HEK293 (cell line): ENCODE measurements at regions of chr7 and their contacts with region 1.

Region 1: DNA sequence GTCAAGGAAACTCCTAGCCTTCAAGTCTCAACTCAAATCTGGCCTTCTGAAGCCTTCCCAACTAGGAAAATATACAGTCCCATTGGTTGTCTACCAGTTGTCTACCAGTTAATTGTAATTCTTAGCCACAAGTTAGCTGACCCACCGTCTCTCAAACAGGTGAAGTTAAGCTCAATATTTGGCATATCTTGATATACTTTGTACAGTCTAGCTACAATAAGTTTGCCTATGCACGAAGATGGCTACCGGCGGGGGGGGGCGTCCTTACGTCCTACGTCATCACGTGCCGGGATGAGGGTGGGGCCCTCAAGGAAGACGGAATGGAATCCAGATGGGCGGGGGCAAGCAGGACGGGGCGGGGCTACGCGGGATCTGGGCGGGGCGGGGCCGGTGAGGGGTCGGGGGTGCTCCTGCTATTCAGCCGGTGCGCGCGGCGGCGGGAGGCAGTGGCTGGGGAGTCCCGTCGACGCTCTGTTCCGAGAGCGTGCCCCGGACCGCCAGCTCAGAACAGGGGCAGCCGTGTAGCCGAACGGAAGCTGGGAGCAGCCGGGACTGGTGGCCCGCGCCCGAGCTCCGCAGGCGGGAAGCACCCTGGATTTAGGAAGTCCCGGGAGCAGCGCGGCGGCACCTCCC is at the start of gene AHR:
- H3K4me3 ChIP-seq: peak within 1 kb of the TSS; percentile 99
- H3K27ac ChIP-seq: peak within 1 kb of the TSS; percentile 87
- H3K4me1 ChIP-seq: peaks cover 13% of the 10 kb centered on the region
- CTCF ChIP-seq: no peak

Region 2: GRCh38 chr7:16982640-16983350 is 315.5 kb before region 1 on chr7:
- CTCF ChIA-PET with region 1: interaction called, 8 read pairs
- POLR2A ChIA-PET with region 1: interaction called, 10 read pairs
- H3K4me3 ChIP-seq: no peak overlapping the region
- H3K27ac ChIP-seq: no peak overlapping the region
- H3K4me1 ChIP-seq: 0 out of 2 replicates have a peak, but pooled peaks cover 3% of the 10 kb centered on the region
- CTCF ChIP-seq: peak; percentile 73

Region 3: GRCh38 chr7:17009007-17009719 is 289.2 kb before region 1 on chr7:
- CTCF ChIA-PET with region 1: interaction called, 16 read pairs
- POLR2A ChIA-PET with region 1: interaction called, 3 read pairs
- H3K4me3 ChIP-seq: no peak overlapping the region
- H3K27ac ChIP-seq: no peak overlapping the region
- H3K4me1 ChIP-seq: no peaks in the 10 kb centered on the region
- CTCF ChIP-seq: no peak

Region 4: GRCh38 chr7:17275749-17276671 is 22.3 kb before region 1 on chr7:
- CTCF ChIA-PET with region 1: interaction called, 4 read pairs
- POLR2A ChIA-PET with region 1: interaction called, 22 read pairs
- H3K4me3 ChIP-seq: no peak overlapping the region
- H3K27ac ChIP-seq: no peak overlapping the region
- H3K4me1 ChIP-seq: peaks cover 7% of the 10 kb centered on the region; the same call in 1 of the 2 replicates
- CTCF ChIP-seq: no peak